Activated CD4-positive, alpha-beta memory T cell treated with anti-CD3 and anti-CD28 coated beads, Interleukin-2, amount 10 ng/mL, durations not matched to agents 7 days and 5 days (primary cell): ENCODE measurements at regions of chr7 and their contacts with region 1.

Region 1: DNA sequence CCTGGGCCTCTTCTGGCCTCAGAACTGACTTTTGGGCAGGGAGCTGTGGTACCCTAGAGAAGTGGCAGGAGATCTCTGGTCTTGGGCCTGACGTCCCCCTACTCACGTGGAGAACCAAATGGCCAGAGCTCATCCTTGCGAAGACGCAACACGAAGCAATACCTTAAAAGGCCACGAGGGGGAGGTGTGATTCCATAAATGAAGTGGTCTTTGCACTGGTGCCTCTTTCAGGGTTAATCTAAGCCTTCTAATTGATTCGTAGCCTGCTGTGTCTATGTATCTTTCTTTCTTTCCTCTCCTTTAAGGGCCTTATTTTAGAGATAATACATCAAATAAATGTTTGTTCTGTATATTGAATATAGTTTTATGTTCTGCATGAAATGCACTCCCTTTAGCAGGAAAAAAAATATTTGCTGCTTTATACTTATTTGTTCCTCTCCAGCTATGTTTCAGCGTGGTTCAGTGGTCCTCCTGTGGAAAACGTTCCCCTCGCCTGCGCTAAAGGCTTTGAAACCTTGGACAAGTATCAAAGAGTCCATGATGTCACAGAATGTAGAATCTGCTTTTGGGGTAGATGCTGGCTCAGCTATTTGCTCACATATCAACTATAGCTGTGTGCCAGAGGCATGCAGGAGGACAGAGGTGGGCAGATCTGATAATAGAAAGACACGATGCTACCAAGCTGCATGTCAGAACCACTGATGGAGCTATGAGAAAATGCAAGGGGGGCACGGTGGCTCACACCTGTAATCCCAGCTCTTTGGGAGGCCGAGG is 41.0 kb downstream of the STRA8 start:
- DNase-seq: peak; percentile 75
- H3K4me3 Mint-ChIP-seq: no peak overlapping the region
- H3K27ac Mint-ChIP-seq: no peak overlapping the region
- H3K4me1 Mint-ChIP-seq: no peaks in the 10 kb centered on the region
- H3K27me3 Mint-ChIP-seq: peaks cover 5% of the 10 kb centered on the region

Region 2: GRCh38 chr7:135260930-135261721 is 13.6 kb before region 1 on chr7:
- CTCF ChIA-PET with region 1: interaction called, 13 read pairs
- POLR2A ChIA-PET with region 1: no interaction called
- DNase-seq: no peak
- H3K4me3 Mint-ChIP-seq: no peak overlapping the region
- H3K27ac Mint-ChIP-seq: no peak overlapping the region
- H3K4me1 Mint-ChIP-seq: no peaks in the 10 kb centered on the region
- H3K27me3 Mint-ChIP-seq: peaks cover 2% of the 10 kb centered on the region

Region 3: DNA sequence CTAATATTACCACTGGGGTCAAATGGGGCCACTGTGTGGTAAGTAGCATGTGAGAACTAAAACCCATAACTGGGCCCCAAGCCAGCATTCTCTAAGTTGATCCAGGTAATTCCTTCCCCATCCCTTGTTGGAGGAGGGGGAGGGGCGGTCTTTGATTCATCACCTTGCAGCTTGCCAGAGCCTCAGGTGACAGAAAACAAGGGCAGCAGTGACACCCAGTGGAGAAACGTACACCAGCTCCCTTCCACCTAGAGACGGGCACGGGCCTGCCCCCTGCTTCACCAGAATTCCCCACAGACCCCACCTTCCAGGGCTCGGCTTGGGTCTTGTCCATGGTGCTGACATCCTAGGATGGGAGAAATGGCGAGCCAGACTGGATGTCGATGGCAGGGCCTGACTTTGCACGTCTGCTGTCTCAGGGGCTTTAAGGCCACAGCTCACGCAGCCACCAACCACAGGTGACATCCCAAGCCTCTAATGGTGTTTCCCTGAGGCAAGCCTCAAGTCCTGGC is 61.0 kb after region 1 on chr7:
- CTCF ChIA-PET with region 1: interaction called, 38 read pairs
- POLR2A ChIA-PET with region 1: interaction called, 3 read pairs
- DNase-seq: peak; percentile 41
- H3K4me3 Mint-ChIP-seq: no peak overlapping the region
- H3K27ac Mint-ChIP-seq: no peak overlapping the region
- H3K4me1 Mint-ChIP-seq: peaks cover 4% of the 10 kb centered on the region
- H3K27me3 Mint-ChIP-seq: no peaks in the 10 kb centered on the region

Region 4: GRCh38 chr7:135372222-135372621 is 97.5 kb after region 1 on chr7:
- CTCF ChIA-PET with region 1: no interaction called
- POLR2A ChIA-PET with region 1: no interaction called
- DNase-seq: no peak
- H3K4me3 Mint-ChIP-seq: no peak overlapping the region
- H3K27ac Mint-ChIP-seq: no peak overlapping the region
- H3K4me1 Mint-ChIP-seq: no peaks in the 10 kb centered on the region
- H3K27me3 Mint-ChIP-seq: no peaks in the 10 kb centered on the region